Activated B cell treated with CpG ODN at 0.5 μM for 24 hours (primary cell): ENCODE measurements at regions of chr22 and their contacts with region 1.

Region 1: GRCh38 chr22:43385770-43386641 is 25.8 kb upstream of the MPPED1 start:
- DNase-seq: peak; percentile 63
- ATAC-seq: peak; percentile 91
- H3K4me3 Mint-ChIP-seq: no peak overlapping the region
- H3K27ac Mint-ChIP-seq: no peak overlapping the region
- H3K4me1 Mint-ChIP-seq: peaks cover 6% of the 10 kb centered on the region
- H3K27me3 Mint-ChIP-seq: peaks cover 17% of the 10 kb centered on the region
- CTCF ChIP-seq: no peak

Region 2: DNA sequence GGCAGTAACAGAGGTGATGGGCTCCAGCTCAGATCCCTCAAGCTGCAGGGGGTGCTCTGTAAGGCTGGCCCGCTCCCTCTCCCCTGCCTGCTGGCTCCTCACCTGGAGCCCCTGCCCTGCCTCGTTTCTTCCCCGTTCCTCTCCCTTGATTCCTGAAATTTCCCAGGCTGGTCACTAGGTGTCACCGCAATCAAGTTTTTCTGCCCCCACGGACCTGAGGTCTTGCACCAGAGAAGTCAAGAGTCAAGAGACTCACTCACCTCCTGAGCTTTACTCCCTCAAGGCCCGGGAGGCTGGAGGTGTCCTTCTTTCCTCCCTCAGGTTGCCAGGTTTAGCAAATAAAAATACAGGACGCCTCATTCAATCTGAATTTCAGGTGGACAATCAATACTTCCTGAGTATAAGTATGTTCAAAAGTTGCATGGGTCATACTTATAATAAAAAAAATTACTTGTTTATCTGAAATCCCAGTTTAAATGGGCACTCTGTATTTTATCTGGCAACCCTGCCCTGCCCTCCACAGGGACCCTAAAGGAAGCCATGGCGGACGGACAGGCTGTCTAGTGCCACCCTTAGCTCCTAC is 112.0 kb before region 1 on chr22:
- CTCF ChIA-PET with region 1: no interaction called
- POLR2A ChIA-PET with region 1: no interaction called
- intact Hi-C with region 1: loop called (anchors 1 kb)
- DNase-seq: no peak
- ATAC-seq: no peak
- H3K4me3 Mint-ChIP-seq: no peak overlapping the region
- H3K27ac Mint-ChIP-seq: no peak overlapping the region
- H3K4me1 Mint-ChIP-seq: no peaks in the 10 kb centered on the region
- H3K27me3 Mint-ChIP-seq: peaks cover 7% of the 10 kb centered on the region
- CTCF ChIP-seq: no peak

Region 3: GRCh38 chr22:43481568-43482317 is 95.7 kb after region 1 on chr22:
- CTCF ChIA-PET with region 1: no interaction called
- POLR2A ChIA-PET with region 1: no interaction called
- intact Hi-C with region 1: loop called (anchors 2 kb)
- DNase-seq: no peak
- ATAC-seq: peak; percentile 49
- H3K4me3 Mint-ChIP-seq: peak overlapping the region; percentile 81
- H3K27ac Mint-ChIP-seq: peak overlapping the region; percentile 74
- H3K4me1 Mint-ChIP-seq: peaks cover 26% of the 10 kb centered on the region
- H3K27me3 Mint-ChIP-seq: peaks cover 1% of the 10 kb centered on the region
- CTCF ChIP-seq: no peak

Region 4: DNA sequence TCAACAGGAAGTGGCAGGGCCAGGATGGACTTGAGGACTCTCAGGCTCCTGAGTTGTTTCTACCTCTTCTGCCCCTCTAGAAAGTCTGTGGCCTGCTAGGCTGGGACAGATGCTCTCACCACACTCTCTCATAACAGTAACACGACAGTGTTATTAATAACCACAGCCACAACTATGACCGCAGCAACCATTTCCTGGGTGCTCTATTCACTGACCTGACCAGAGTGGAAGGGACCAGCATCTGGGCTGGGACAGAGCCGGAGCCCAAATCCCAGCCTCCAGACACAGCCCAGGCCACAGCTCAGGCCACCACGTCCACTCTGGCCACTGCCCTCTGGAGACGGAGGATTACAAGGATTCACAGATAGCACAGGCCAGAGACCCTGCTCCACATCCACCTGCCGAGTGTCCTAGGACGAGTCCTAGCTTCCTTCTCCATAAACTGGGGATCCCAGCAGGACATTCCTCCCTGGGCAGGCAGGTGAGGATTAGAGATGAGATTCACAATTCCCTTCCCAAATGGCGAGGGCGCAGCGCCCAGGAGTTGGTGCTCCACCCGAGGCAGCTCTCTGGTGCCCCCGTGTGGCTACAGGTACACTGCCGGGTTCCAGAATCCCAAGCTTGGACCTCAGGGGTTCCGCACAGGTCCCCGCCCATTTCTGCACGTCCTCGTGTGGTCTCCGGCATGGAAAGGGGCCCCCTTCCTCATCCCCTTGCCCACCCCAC is 498.8 kb after region 1 on chr22:
- CTCF ChIA-PET with region 1: no interaction called
- POLR2A ChIA-PET with region 1: no interaction called
- intact Hi-C with region 1: loop called (anchors 10 kb)
- DNase-seq: peak; percentile 31
- ATAC-seq: no peak
- H3K4me3 Mint-ChIP-seq: no peak overlapping the region
- H3K27ac Mint-ChIP-seq: no peak overlapping the region
- H3K4me1 Mint-ChIP-seq: peaks cover 5% of the 10 kb centered on the region
- H3K27me3 Mint-ChIP-seq: peaks cover 30% of the 10 kb centered on the region
- CTCF ChIP-seq: no peak